ENCODE measurements at regions of chr10 and their contacts with region 1.

Region 1: GRCh38 chr10:51244748-51245490 is 170.6 kb downstream of the PRKG1 start:
- DNase-seq: no peak
- ATAC-seq: peak; percentile 76
- H3K4me3 ChIP-seq: no peak overlapping the region
- H3K27ac ChIP-seq: no peak overlapping the region
- H3K4me1 ChIP-seq: peaks cover 2 to 20% of the 10 kb centered on the region in 2 donors
- H3K27me3 ChIP-seq: no peaks in the 10 kb centered on the region

Region 2: GRCh38 chr10:50968386-50969091 is 276.4 kb before region 1 on chr10:
- intact Hi-C with region 1: no loop called
- DNase-seq: no peak
- ATAC-seq: no peak
- H3K4me3 ChIP-seq: no peak overlapping the region
- H3K27ac ChIP-seq: no peak overlapping the region
- H3K4me1 ChIP-seq: no peaks in the 10 kb centered on the region
- H3K27me3 ChIP-seq: no peaks in the 10 kb centered on the region

Region 3: GRCh38 chr10:51186361-51186760 is 58.6 kb before region 1 on chr10:
- intact Hi-C with region 1: loop called in 1 of 2 experiments (anchors 5 kb)
- DNase-seq: peak in 1 of 2 donors; percentile 42
- ATAC-seq: no peak
- H3K4me3 ChIP-seq: no peak overlapping the region
- H3K27ac ChIP-seq: peak overlapping the region in 1 of 2 donors; percentile 51
- H3K4me1 ChIP-seq: peaks cover 3 to 7% of the 10 kb centered on the region in 2 donors
- H3K27me3 ChIP-seq: no peaks in the 10 kb centered on the region

Region 4: DNA sequence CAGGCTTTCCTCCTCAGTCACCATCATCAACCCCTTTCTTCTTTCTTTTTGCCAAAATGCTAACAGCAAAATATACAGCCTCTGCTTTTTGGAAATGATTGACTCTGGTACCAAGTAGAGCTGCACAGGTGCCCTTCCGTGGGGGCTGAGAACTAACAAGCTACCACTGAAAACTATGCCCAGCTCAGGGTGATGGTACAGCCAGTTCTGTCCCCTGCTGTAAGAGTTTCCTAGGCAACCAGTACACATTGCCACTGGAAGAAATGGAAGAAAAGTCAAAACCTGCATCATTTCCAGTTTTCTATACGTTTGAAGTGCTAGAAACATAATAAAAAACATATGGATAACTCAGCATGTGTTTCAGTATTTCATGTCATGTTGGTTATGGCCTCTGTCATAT is 126.8 kb after region 1 on chr10:
- intact Hi-C with region 1: no loop called
- DNase-seq: no peak
- ATAC-seq: no peak
- H3K4me3 ChIP-seq: no peak overlapping the region
- H3K27ac ChIP-seq: no peak overlapping the region
- H3K4me1 ChIP-seq: peaks cover 2 to 12% of the 10 kb centered on the region in 2 donors
- H3K27me3 ChIP-seq: no peaks in the 10 kb centered on the region